ENCODE measurements at regions of chr2 and their contacts with region 1.

Region 1: DNA sequence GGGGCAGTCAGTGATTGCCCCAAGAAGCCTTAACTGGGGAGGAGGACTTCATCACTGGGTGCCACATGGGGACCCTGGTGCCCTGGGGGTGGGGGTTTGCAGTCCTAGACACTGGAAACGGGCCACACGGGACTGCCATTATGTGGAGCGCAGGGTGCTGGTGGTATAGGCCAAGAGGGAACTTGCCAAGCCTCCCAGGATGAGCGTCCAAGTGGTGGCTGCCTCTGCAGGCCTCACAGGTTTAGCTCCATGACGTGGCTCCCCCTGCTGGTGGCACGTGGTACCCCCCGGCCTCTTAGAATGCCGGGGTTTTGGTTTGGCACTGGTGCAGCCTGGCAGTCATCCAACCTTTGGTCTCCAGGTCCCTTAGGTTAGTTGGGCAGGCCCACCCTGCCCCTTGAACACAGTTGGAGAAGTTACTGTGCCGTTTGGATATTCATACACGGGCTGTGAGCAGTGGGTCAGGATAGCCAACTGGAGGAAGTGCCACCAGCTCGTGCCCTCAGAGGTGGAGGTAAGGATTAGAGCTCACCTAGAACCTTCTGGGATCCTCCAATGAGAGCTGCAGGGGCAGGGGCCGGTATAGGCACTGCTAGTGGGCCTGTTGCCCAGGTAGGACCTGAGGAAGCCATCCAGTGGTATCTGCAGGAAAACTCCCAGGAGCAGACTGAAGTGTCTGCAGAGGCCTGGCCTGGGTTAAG is 5.6 kb downstream of the PTMA start:
- DNase-seq: peak; percentile 74 to 94 (median 84)

Region 2: GRCh38 chr2:231321556-231322334 is 392.1 kb before region 1 on chr2:
- intact Hi-C with region 1: no loop called
- DNase-seq: peak in 19 of 42 donors; percentile 19 to 59 (median 39)

Region 3: DNA sequence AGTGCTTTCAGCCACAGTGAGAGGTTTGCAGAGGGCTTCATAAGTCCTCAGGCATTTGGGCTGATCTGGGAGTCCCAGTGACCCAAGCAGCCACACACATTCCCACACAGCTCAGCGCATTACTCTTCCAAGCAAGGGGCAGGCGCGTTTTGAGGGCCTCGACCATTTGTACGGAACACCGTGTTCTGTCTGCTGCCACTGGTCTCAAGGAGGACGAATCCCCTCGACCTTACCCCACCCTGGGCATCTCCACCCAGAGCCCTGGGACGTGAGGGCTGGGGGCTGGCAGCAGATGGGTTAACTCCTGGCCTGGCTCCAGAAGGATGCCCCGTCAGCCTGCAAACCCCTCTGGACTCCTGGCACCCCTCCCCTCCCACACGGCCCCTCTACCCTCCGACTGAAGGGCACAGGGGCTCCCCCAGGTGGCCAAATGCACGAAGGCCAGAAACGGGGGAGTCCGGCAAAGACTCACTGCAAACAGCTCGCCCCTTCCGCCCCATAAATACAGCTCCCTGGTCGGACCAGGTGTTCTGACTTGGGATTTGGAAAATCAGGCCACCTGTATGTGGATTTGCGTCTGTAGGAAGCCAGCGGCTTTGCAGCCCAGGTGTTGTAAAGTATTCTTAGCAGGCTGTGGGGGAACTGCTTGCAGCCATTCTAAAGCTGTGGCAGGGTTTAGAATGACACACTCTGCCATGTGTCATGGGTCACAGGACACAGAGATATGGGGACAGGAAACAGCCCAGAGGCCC is 39.1 kb before region 1 on chr2:
- intact Hi-C with region 1: loop called (anchors 2 kb)
- DNase-seq: peak; percentile 55 to 92 (median 79)

Region 4: DNA sequence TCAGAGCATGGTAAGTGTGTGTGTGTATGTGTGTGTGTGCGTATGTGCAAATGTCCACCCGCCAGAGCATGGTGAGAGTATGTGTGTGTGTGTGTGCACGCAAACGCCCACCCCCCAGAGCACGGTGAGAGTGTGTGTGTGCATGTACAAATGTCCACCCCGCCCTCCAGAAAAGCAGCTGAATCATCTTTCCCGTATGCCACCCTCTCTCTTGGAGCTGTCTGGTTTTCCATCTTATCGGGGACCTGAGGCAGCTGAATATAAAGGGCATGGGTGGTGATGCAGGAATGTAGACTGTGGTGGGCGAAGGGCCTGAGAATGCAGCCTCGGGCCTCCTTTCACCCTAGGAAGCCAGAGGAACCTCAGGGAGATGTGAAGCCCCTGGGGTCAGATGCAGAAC is 139.2 kb after region 1 on chr2:
- intact Hi-C with region 1: no loop called
- DNase-seq: peak in 1 of 42 donors; percentile 5